ENCODE measurements at regions of chr12 and their contacts with region 1.

Region 1: DNA sequence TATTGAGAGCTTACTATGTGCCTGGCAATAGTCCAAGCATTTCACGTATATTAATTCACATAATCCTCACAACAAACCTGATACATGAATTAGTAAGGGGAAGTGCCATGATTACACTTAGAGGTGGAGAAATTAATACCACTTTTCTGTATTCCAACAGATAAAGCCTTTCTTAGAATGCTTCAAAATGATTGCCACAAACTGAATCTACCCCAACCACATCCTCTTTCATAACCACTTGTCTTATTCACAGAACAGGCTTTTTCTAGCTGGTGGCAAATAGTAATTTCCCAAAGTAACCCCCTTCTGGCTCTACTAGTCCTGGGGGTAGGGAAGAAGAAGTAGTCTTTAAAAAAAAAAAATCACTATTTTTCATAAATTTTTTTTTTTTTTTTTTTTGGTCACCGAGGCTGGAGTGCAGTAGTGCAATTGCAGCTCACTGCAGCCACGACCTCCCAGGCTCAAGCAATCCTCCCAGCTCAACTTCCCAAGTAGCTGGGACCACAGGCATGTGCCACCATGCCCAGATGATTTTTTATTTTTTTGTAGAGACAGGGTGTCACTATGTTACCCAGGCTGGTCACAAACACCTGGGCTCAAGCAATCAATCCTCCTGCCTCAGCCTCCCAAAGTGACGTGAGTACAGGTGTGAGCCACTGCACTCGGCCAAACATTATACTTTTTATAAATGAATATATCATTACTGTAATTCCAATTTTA is 59.0 kb upstream of the ARID2 start:
- DNase-seq: peak in 2 of 5 donors; percentile 42 to 44
- H3K4me3 ChIP-seq: no peak overlapping the region
- H3K4me3 Mint-ChIP-seq: peak overlapping the region; percentile 2 to 64 (median 45)
- H3K27ac ChIP-seq: no peak overlapping the region
- H3K27ac Mint-ChIP-seq: peak overlapping the region in 3 of 8 donors; percentile 9 to 38 (median 16)
- H3K4me1 ChIP-seq: peaks cover 30% of the 10 kb centered on the region
- H3K4me1 Mint-ChIP-seq: peaks cover 27 to 35% (median 28%) of the 10 kb centered on the region in 3 donors
- H3K27me3 ChIP-seq: no peaks in the 10 kb centered on the region
- H3K27me3 Mint-ChIP-seq: peaks cover 0 to 2% of the 10 kb centered on the region in 2 donors

Region 2: GRCh38 chr12:45655201-45655600 is 15.3 kb before region 1 on chr12:
- CTCF ChIA-PET with region 1: interaction called, 17 read pairs
- POLR2A ChIA-PET with region 1: interaction called, 3 read pairs
- DNase-seq: peak; percentile 27 to 81 (median 60)
- H3K4me3 ChIP-seq: no peak overlapping the region
- H3K4me3 Mint-ChIP-seq: no peak overlapping the region
- H3K27ac ChIP-seq: no peak overlapping the region
- H3K27ac Mint-ChIP-seq: no peak overlapping the region
- H3K4me1 ChIP-seq: no peaks in the 10 kb centered on the region
- H3K4me1 Mint-ChIP-seq: peaks cover 0 to 11% (median 0%) of the 10 kb centered on the region in 3 donors
- H3K27me3 ChIP-seq: no peaks in the 10 kb centered on the region
- H3K27me3 Mint-ChIP-seq: peaks cover 2 to 20% of the 10 kb centered on the region in 2 donors

Region 3: DNA sequence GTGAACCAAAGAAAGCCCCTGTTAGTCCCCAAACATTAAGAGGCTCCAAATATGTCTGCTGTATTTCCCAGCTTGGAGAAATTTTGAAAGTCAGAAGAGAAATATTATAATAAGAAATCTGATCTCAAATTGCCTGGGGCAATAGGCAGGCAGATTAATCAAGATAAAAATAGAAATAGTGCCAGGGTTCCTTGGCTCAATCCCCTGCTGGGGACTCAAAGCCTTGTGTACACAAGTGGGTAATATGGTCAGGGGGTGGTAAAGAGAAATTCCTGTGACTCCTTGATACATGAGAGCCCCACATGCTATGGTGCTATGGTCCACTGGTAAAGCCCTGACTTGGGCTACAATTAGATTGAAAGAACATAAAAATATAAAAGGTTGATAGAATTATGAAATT is 17.7 kb after region 1 on chr12:
- CTCF ChIA-PET with region 1: no interaction called
- POLR2A ChIA-PET with region 1: no interaction called
- DNase-seq: no peak
- H3K4me3 ChIP-seq: no peak overlapping the region
- H3K4me3 Mint-ChIP-seq: no peak overlapping the region
- H3K27ac ChIP-seq: no peak overlapping the region
- H3K27ac Mint-ChIP-seq: no peak overlapping the region
- H3K4me1 ChIP-seq: no peaks in the 10 kb centered on the region
- H3K4me1 Mint-ChIP-seq: no peaks in the 10 kb centered on the region
- H3K27me3 ChIP-seq: no peaks in the 10 kb centered on the region
- H3K27me3 Mint-ChIP-seq: peaks cover 2 to 12% of the 10 kb centered on the region in 2 donors

Region 4: DNA sequence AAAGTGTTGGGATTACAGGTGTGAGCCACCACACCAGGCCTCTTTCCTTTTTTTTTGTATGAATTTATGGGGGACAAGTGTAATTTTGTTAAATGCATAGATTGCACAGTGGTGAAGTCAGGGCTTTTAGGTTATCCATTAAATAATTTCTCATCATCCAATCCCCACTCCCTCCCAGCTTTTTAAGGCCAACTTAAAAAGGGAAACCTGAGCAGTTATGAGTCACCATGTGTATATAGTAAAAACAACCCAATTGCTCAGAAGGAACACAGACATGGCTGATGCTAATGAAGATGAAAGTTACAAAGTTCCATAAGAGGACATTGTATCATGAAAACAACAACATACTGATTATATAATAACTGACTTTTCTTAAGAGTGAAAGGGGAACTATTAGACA is 33.4 kb after region 1 on chr12:
- CTCF ChIA-PET with region 1: no interaction called
- POLR2A ChIA-PET with region 1: no interaction called
- DNase-seq: no peak
- H3K4me3 ChIP-seq: no peak overlapping the region
- H3K4me3 Mint-ChIP-seq: no peak overlapping the region
- H3K27ac ChIP-seq: no peak overlapping the region
- H3K27ac Mint-ChIP-seq: no peak overlapping the region
- H3K4me1 ChIP-seq: no peaks in the 10 kb centered on the region
- H3K4me1 Mint-ChIP-seq: peaks cover 0 to 3% (median 2%) of the 10 kb centered on the region in 3 donors
- H3K27me3 ChIP-seq: no peaks in the 10 kb centered on the region
- H3K27me3 Mint-ChIP-seq: no peaks in the 10 kb centered on the region

Measured in CD8-positive, alpha-beta memory T cell (primary cell).